ENCODE measurements at regions of chr3 and their contacts with region 1.

Region 1: GRCh38 chr3:13282986-13283876 is 136.9 kb downstream of the NUP210 start:
- DNase-seq: peak in 1 of 2 experiments; percentile 74
- H3K4me3 ChIP-seq: peak overlapping the region; percentile 18 to 67 (median 35)
- H3K27ac ChIP-seq: no peak overlapping the region
- H3K4me1 ChIP-seq: peaks cover 0 to 11% (median 6%) of the 10 kb centered on the region in 4 experiments; a peak in 5 of 7 replicates
- H3K27me3 ChIP-seq: peaks cover 7 to 26% (median 19%) of the 10 kb centered on the region in 4 experiments
- CTCF ChIP-seq: peak in 2 of 3 experiments; percentile 62 to 65; a peak in 3 of 4 replicates
- EP300 ChIP-seq: no peak
- POLR2A ChIP-seq: no peak
- RAD21 ChIP-seq: peak; percentile 56 to 69

Region 2: GRCh38 chr3:13162550-13163435 is 120.4 kb before region 1 on chr3:
- CTCF ChIA-PET with region 1: no interaction called
- POLR2A ChIA-PET with region 1: no interaction called
- DNase-seq: no peak
- H3K4me3 ChIP-seq: no peak overlapping the region
- H3K27ac ChIP-seq: no peak overlapping the region
- H3K4me1 ChIP-seq: peaks cover 4 to 26% (median 18%) of the 10 kb centered on the region in 4 experiments
- H3K27me3 ChIP-seq: no peaks in the 10 kb centered on the region
- CTCF ChIP-seq: no peak
- EP300 ChIP-seq: peak in 1 of 2 experiments; percentile 10; a peak in 1 of 3 replicates
- POLR2A ChIP-seq: no peak
- RAD21 ChIP-seq: no peak

Region 3: DNA sequence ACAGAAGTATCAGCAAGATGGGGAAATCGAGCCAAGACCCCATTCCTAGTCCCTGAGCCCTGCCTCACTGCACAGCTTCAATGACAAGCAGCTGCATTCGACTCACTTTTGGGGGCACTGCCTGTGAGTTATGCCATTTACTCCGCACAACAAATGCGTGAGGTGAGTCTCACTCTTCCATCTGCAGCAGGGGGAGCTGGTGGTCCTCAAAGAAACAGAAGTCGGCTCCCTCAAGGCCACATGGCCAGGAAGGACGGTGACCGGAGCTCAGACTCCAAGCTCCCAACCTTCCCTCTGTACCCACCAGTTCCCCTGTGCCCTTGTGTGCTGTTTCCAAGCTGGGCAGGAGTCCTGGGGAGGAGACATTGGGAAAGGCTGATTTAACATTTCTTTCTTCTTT is 82.3 kb before region 1 on chr3:
- CTCF ChIA-PET with region 1: interaction called, 14 read pairs
- POLR2A ChIA-PET with region 1: no interaction called
- DNase-seq: peak in 1 of 2 experiments; percentile 19
- H3K4me3 ChIP-seq: no peak overlapping the region
- H3K27ac ChIP-seq: no peak overlapping the region
- H3K4me1 ChIP-seq: peaks cover 0 to 3% (median under 1%) of the 10 kb centered on the region in 4 experiments; a peak in 5 of 7 replicates
- H3K27me3 ChIP-seq: peaks cover 0 to 4% (median 3%) of the 10 kb centered on the region in 4 experiments; a peak in 4 of 7 replicates
- CTCF ChIP-seq: peak in 2 of 3 experiments; percentile 71 to 72; a peak in 3 of 4 replicates
- EP300 ChIP-seq: no peak
- POLR2A ChIP-seq: no peak
- RAD21 ChIP-seq: peak; percentile 81 to 85

Region 4: GRCh38 chr3:13301286-13301987 is 18.2 kb after region 1 on chr3:
- CTCF ChIA-PET with region 1: interaction called, 18 read pairs
- POLR2A ChIA-PET with region 1: interaction called, 3 read pairs
- DNase-seq: peak; percentile 74
- H3K4me3 ChIP-seq: no peak overlapping the region
- H3K27ac ChIP-seq: no peak overlapping the region; the same call in 1 of the 2 replicates
- H3K4me1 ChIP-seq: peaks cover 0 to 13% (median 6%) of the 10 kb centered on the region in 4 experiments; a peak in 6 of 7 replicates
- H3K27me3 ChIP-seq: no peaks in the 10 kb centered on the region; a peak in 1 of 7 replicates
- CTCF ChIP-seq: no peak
- EP300 ChIP-seq: 0 out of 3 replicates have a peak, but pooled peaks of 1 of the 2 experiments have one; percentile 2
- POLR2A ChIP-seq: no peak
- RAD21 ChIP-seq: no peak

Region 5: GRCh38 chr3:13339833-13340232 is 56.6 kb after region 1 on chr3:
- CTCF ChIA-PET with region 1: interaction called, 10 read pairs
- POLR2A ChIA-PET with region 1: no interaction called
- DNase-seq: no peak
- H3K4me3 ChIP-seq: no peak overlapping the region
- H3K27ac ChIP-seq: no peak overlapping the region
- H3K4me1 ChIP-seq: peaks cover 0 to 4% (median 2%) of the 10 kb centered on the region in 4 experiments; a peak in 4 of 7 replicates
- H3K27me3 ChIP-seq: no peaks in the 10 kb centered on the region
- CTCF ChIP-seq: no peak
- EP300 ChIP-seq: no peak
- POLR2A ChIP-seq: no peak
- RAD21 ChIP-seq: no peak

Region 6: DNA sequence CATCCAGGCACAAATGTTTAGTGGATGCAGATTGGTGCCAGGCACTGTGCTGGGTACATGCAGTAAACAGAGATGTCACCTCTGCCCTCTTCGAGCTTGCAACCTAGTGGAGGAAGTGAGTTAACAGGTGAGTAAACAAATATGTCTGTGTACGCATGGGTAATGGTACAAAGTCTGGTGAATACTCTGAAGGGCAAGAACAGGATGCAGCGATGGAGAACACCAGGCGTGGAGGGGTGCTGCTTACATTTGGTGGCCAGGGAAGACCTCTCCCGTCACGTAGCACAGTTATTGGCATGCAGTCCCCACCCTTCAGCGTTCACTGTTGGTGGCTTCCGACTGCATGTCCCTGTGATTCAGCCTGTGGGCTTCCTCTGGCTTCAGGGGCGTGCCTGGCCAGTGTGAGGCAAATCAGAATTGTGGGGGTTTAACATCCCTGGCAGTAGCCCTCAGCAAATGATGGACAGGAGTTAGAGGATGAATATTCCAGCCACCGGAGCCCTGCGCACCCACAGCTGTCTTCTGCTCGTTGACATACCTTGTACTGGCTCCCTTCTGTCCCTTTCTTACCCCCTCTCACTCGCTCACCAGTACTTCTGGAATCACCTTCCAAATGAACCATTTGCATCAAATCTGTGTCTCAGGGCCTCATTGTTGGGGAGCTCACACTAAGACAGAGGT is 187.8 kb after region 1 on chr3:
- CTCF ChIA-PET with region 1: no interaction called
- POLR2A ChIA-PET with region 1: no interaction called
- DNase-seq: no peak
- H3K4me3 ChIP-seq: no peak overlapping the region
- H3K27ac ChIP-seq: no peak overlapping the region
- H3K4me1 ChIP-seq: peaks cover 5 to 13% (median 5%) of the 10 kb centered on the region in 4 experiments; a peak in 6 of 7 replicates
- H3K27me3 ChIP-seq: peaks cover 0 to 12% (median 7%) of the 10 kb centered on the region in 4 experiments; a peak in 3 of 7 replicates
- CTCF ChIP-seq: no peak
- EP300 ChIP-seq: no peak
- POLR2A ChIP-seq: no peak
- RAD21 ChIP-seq: no peak